CD8-positive, alpha-beta memory T cell (primary cell): ENCODE measurements at regions of chr6 and their contacts with region 1.

Region 1: DNA sequence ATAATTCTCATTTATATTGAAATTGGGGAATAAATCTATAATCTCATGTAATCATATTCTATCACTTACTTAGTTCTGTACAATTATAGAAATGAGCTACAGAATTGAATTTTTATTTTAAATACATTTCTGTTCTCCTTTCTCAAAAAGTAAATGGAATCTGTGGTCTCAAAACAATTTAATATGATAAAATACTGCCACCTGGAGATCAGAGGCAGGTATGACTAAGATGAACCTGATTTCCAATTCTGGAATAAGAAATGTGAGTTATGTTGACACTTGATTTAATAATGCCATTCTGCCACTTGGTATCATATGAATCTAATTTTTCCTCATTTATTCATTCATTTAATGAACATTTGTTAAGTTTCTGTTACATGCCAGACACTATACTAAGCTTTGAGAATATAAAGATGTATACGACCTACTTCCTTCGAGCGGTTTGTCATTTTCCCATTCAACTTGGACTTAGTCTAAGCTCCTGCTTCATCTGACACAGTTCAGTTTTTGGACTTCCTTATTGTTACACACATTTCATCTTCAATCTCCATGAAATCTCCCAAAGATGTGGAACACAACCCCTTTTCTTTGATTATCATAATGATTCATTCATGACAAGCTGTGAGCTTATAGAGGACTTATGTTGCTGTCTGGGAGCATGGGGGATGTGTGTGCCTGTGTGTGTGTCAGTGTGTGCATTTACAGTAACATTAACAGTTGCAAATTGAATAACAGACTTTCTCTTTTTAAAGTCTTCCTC is 7.5 kb upstream of the CCDC28A start:
- DNase-seq: peak in 2 of 5 donors; percentile 17 to 19
- H3K4me3 ChIP-seq: no peak overlapping the region
- H3K4me3 Mint-ChIP-seq: no peak overlapping the region
- H3K27ac ChIP-seq: no peak overlapping the region
- H3K27ac Mint-ChIP-seq: peak overlapping the region in 1 of 8 donors; percentile 20
- H3K4me1 ChIP-seq: no peaks in the 10 kb centered on the region
- H3K4me1 Mint-ChIP-seq: no peaks in the 10 kb centered on the region
- H3K27me3 ChIP-seq: no peaks in the 10 kb centered on the region
- H3K27me3 Mint-ChIP-seq: peaks cover 0 to 3% of the 10 kb centered on the region in 2 donors

Region 2: GRCh38 chr6:138588805-138589434 is 177.2 kb before region 1 on chr6:
- CTCF ChIA-PET with region 1: interaction called, 21 read pairs
- POLR2A ChIA-PET with region 1: no interaction called
- DNase-seq: peak; percentile 19 to 62 (median 43)
- H3K4me3 ChIP-seq: no peak overlapping the region
- H3K4me3 Mint-ChIP-seq: peak overlapping the region in 1 of 7 donors; percentile 4
- H3K27ac ChIP-seq: no peak overlapping the region
- H3K27ac Mint-ChIP-seq: no peak overlapping the region
- H3K4me1 ChIP-seq: peaks cover 8% of the 10 kb centered on the region
- H3K4me1 Mint-ChIP-seq: peaks cover 15 to 24% (median 21%) of the 10 kb centered on the region in 3 donors
- H3K27me3 ChIP-seq: no peaks in the 10 kb centered on the region
- H3K27me3 Mint-ChIP-seq: peaks cover 0 to 5% of the 10 kb centered on the region in 2 donors